ENCODE measurements at regions of chr1 and their contacts with region 1.

Region 1: DNA sequence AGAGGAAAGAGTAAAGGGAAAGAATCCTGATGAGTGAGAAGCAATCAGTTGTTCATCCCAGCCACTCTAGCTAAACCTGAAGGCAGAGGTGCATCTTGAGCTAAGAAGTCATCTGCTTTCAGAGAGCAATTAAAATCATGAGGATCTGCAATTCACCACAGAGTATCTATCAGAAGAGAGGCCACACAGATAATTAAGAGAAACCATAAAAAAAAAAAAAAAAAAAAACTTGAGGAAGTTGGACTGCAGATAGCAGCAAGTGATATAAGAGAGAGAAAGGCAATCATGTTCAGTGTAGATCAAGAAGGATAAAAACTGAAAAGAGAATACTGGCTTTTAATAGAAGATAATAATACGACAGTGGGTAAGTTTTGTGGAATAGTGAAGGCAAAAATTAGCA is 17.7 kb downstream of the FOXJ3 start:
- DNase-seq: no peak
- H3K4me3 ChIP-seq: no peak overlapping the region
- H3K27ac ChIP-seq: no peak overlapping the region
- H3K4me1 ChIP-seq: peaks cover 7% of the 10 kb centered on the region; the same call in 1 of the 2 replicates
- H3K27me3 ChIP-seq: no peaks in the 10 kb centered on the region
- CTCF ChIP-seq: no peak

Region 2: DNA sequence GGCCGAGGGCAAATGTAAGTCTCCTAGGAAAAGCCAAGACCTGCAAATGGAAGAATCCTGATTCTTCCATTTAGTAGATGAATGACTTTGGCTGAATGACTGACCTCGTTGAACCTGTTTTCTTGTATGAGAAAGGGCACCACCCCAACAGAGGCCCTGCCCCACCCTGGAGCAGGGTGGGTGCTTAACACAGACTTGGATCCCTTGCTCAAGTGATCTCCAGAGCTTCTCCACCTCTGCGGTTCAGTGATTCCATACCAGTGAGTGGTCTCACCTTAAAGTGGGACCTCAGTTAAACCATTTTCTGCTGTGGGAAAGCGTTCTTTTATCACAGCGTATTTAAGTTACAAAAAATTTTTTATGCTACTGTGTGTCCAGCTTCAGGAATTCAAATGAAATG is 203.0 kb before region 1 on chr1:
- CTCF ChIA-PET with region 1: no interaction called
- POLR2A ChIA-PET with region 1: interaction called, 26 read pairs
- intact Hi-C with region 1: no loop called
- DNase-seq: peak in 1 of 2 experiments; percentile 12
- H3K4me3 ChIP-seq: no peak overlapping the region
- H3K27ac ChIP-seq: no peak overlapping the region
- H3K4me1 ChIP-seq: no peaks in the 10 kb centered on the region
- H3K27me3 ChIP-seq: no peaks in the 10 kb centered on the region
- CTCF ChIP-seq: no peak

Region 3: GRCh38 chr1:42195841-42196240 is 121.5 kb before region 1 on chr1:
- CTCF ChIA-PET with region 1: no interaction called
- POLR2A ChIA-PET with region 1: no interaction called
- intact Hi-C with region 1: no loop called
- DNase-seq: no peak
- H3K4me3 ChIP-seq: no peak overlapping the region
- H3K27ac ChIP-seq: no peak overlapping the region
- H3K4me1 ChIP-seq: no peaks in the 10 kb centered on the region
- H3K27me3 ChIP-seq: no peaks in the 10 kb centered on the region
- CTCF ChIP-seq: no peak

Measured in PC-9 (cell line).